Sigmoid colon (tissue), 7 donors: ENCODE measurements at regions of chr11 and their contacts with region 1.

Region 1: GRCh38 chr11:18634140-18635032 is at the start of gene SPTY2D1:
- DNase-seq: peak; percentile 100
- H3K4me3 ChIP-seq: peak within 1 kb of the TSS; percentile 57 to 74 (median 68)
- H3K27ac ChIP-seq: peak within 1 kb of the TSS; percentile 90 to 95 (median 92)
- H3K4me1 ChIP-seq: peaks cover 0 to 24% (median 16%) of the 10 kb centered on the region in 4 donors
- H3K27me3 ChIP-seq: no peaks in the 10 kb centered on the region
- CTCF ChIP-seq: no peak
- EP300 ChIP-seq: peak in 1 of 4 donors; percentile 86
- POLR2A ChIP-seq: peak; percentile 91 to 93
- total RNA-seq, gene SPTY2D1: 9.6 to 16.3 (median 12.4) TPM

Region 2: DNA sequence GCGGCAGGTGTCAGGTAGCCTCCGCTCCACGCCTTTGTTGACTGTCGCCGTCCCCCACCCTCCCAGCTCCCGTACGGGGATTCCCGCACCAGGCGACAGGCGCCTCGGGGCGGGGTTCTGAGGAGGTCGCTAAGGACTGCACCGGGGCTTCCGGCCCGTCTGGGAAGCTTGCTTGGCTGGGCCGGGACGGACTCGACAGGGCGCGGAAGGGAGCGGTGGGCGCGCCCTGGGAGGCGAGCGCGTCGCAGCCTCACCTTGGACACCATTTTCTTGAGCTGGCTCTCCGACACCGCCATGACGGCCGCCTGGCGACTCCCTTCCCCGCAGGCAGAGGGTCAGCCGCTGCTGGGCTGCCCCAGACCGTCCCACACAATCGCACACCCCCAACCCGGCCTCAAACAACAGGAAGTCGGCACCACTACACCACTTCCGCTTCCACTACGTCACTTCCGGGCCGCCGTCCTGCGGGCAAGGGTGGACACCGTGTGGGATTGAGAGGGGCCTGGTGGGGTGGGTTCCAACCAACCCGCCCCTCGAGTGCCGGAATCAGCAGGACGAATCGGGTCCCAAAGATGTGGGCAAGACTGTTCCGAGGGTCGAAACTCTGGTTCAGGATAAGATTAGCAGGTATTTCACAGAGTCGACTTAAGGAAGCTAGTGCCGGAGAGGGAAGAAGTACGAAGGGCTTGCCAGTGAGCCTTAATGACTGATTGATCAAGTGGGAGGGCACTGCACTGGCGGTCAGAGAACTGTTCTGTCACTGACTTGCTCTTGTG is 107.7 kb before region 1 on chr11 and contains the start of gene TSG101:
- intact Hi-C with region 1: loop called (anchors 5 kb)
- DNase-seq: peak; percentile 95
- H3K4me3 ChIP-seq: peak within 1 kb of the TSS; percentile 82 to 95 (median 90)
- H3K27ac ChIP-seq: peak within 1 kb of the TSS; percentile 88 to 95 (median 92)
- H3K4me1 ChIP-seq: peaks cover 0 to 27% (median 22%) of the 10 kb centered on the region in 4 donors
- H3K27me3 ChIP-seq: no peaks in the 10 kb centered on the region
- CTCF ChIP-seq: no peak
- EP300 ChIP-seq: peak in 1 of 4 donors; percentile 14
- POLR2A ChIP-seq: peak; percentile 91 to 93
- total RNA-seq, gene TSG101: 70.3 to 100 (median 89.8) TPM

Region 3: GRCh38 chr11:18588297-18589252 is 45.8 kb before region 1 on chr11 and contains the start of gene UEVLD:
- intact Hi-C with region 1: loop called (anchors 2 kb)
- DNase-seq: peak; percentile 96
- H3K4me3 ChIP-seq: peak within 1 kb of the TSS; percentile 70 to 88 (median 84)
- H3K27ac ChIP-seq: peak within 1 kb of the TSS; percentile 85 to 88 (median 86)
- H3K4me1 ChIP-seq: peaks cover 0 to 40% (median 35%) of the 10 kb centered on the region in 4 donors
- H3K27me3 ChIP-seq: no peaks in the 10 kb centered on the region
- CTCF ChIP-seq: no peak
- EP300 ChIP-seq: peak in 1 of 4 donors; percentile 35
- POLR2A ChIP-seq: peak; percentile 72 to 75
- total RNA-seq, gene UEVLD: 22.3 to 40.3 (median 28.8) TPM

Region 4: GRCh38 chr11:18698341-18699268 is 64.2 kb after region 1 on chr11 and contains the start of gene TMEM86A:
- intact Hi-C with region 1: loop called (anchors 2 kb)
- DNase-seq: peak; percentile 97
- H3K4me3 ChIP-seq: peak within 1 kb of the TSS; percentile 62 to 98 (median 78)
- H3K27ac ChIP-seq: peak within 1 kb of the TSS; percentile 76 to 82 (median 77)
- H3K4me1 ChIP-seq: peaks cover 3 to 18% (median 15%) of the 10 kb centered on the region in 4 donors
- H3K27me3 ChIP-seq: no peaks in the 10 kb centered on the region
- CTCF ChIP-seq: no peak
- EP300 ChIP-seq: no peak
- POLR2A ChIP-seq: peak in 1 of 2 donors; percentile 43
- total RNA-seq, gene TMEM86A: 3.7 to 5.3 (median 4.8) TPM

Region 5: GRCh38 chr11:18721561-18722292 is 87.3 kb after region 1 on chr11:
- intact Hi-C with region 1: loop called (anchors 5 kb)
- DNase-seq: no peak
- H3K4me3 ChIP-seq: peak overlapping the region; percentile 39 to 69 (median 59)
- H3K27ac ChIP-seq: peak overlapping the region; percentile 63 to 74 (median 68)
- H3K4me1 ChIP-seq: peaks cover 0 to 20% (median 15%) of the 10 kb centered on the region in 4 donors
- H3K27me3 ChIP-seq: no peaks in the 10 kb centered on the region
- CTCF ChIP-seq: peak; percentile 48 to 78 (median 70)
- EP300 ChIP-seq: no peak
- POLR2A ChIP-seq: no peak

Region 6: GRCh38 chr11:18972336-18972735 is 337.9 kb after region 1 on chr11:
- intact Hi-C with region 1: no loop called
- DNase-seq: no peak
- H3K4me3 ChIP-seq: no peak overlapping the region
- H3K27ac ChIP-seq: no peak overlapping the region
- H3K4me1 ChIP-seq: no peaks in the 10 kb centered on the region
- H3K27me3 ChIP-seq: no peaks in the 10 kb centered on the region
- CTCF ChIP-seq: no peak
- EP300 ChIP-seq: no peak
- POLR2A ChIP-seq: no peak